Ovary (tissue), 10 donors: ENCODE measurements at regions of chr1 and their contacts with region 1.

Region 1: DNA sequence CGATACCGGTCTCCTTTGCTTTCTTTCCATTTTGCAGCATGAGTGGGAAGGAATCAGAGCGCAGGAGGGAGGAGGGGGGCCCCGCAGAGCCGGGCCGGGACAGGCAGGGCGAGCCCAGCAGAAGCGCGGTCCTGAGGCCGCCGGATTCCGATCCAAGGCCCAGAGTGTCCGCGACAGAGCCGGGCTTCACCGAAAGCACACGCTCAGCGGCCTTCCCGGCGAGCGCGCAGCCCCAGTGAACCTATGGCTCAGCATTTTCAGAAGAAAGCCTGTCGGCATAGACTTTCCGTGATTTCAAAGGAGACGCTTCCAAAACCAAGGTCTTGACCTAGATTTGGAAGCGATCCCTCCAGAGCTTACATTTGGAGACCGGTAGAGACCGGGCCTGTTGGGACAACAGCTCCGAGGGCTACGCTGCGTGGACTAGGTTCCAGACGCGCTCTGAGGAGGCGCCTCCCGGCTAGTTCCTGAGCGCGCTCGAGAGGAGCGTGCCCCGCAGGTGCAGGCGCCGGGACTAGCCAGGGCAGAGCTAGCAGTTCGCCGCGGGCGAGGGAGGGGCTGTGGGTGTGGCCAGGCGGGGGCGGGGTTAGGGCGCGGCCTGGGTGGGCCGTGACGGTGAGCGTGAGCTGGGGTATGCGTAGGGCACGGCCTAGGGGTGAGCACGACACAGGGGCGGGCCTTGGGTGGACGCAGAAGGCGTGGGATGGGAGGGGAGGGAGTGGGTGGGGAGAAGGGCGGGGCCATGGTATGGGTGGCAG is 27.8 kb upstream of the PRSS38 start:
- DNase-seq: peak; percentile 80 to 89 (median 85)
- H3K4me3 ChIP-seq: peak overlapping the region; percentile 41
- H3K27ac ChIP-seq: peak overlapping the region; percentile 17 to 76
- H3K4me1 ChIP-seq: peaks cover 17% of the 10 kb centered on the region
- H3K27me3 ChIP-seq: no peaks in the 10 kb centered on the region
- CTCF ChIP-seq: no peak
- EP300 ChIP-seq: no peak
- POLR2A ChIP-seq: no peak

Region 2: GRCh38 chr1:226135059-226135651 is 1652.5 kb before region 1 on chr1:
- intact Hi-C with region 1: no loop called
- DNase-seq: peak in 1 of 5 donors; percentile 57
- H3K4me3 ChIP-seq: no peak overlapping the region
- H3K27ac ChIP-seq: no peak overlapping the region
- H3K4me1 ChIP-seq: peaks cover 8% of the 10 kb centered on the region
- H3K27me3 ChIP-seq: no peaks in the 10 kb centered on the region
- CTCF ChIP-seq: no peak
- EP300 ChIP-seq: no peak
- POLR2A ChIP-seq: no peak

Region 3: GRCh38 chr1:227728059-227728891 is 59.4 kb before region 1 on chr1:
- intact Hi-C with region 1: loop called in 1 of 4 experiments (anchors 2 kb)
- DNase-seq: peak; percentile 82 to 90 (median 84)
- H3K4me3 ChIP-seq: peak overlapping the region; percentile 57
- H3K27ac ChIP-seq: peak overlapping the region; percentile 87 to 90
- H3K4me1 ChIP-seq: peaks cover 21% of the 10 kb centered on the region
- H3K27me3 ChIP-seq: no peaks in the 10 kb centered on the region
- CTCF ChIP-seq: no peak
- EP300 ChIP-seq: no peak
- POLR2A ChIP-seq: no peak

Region 4: GRCh38 chr1:227855687-227856086 is 68.0 kb after region 1 on chr1:
- intact Hi-C with region 1: no loop called
- DNase-seq: no peak
- H3K4me3 ChIP-seq: no peak overlapping the region
- H3K27ac ChIP-seq: no peak overlapping the region
- H3K4me1 ChIP-seq: no peaks in the 10 kb centered on the region
- H3K27me3 ChIP-seq: no peaks in the 10 kb centered on the region
- CTCF ChIP-seq: no peak
- EP300 ChIP-seq: no peak
- POLR2A ChIP-seq: no peak

Region 5: DNA sequence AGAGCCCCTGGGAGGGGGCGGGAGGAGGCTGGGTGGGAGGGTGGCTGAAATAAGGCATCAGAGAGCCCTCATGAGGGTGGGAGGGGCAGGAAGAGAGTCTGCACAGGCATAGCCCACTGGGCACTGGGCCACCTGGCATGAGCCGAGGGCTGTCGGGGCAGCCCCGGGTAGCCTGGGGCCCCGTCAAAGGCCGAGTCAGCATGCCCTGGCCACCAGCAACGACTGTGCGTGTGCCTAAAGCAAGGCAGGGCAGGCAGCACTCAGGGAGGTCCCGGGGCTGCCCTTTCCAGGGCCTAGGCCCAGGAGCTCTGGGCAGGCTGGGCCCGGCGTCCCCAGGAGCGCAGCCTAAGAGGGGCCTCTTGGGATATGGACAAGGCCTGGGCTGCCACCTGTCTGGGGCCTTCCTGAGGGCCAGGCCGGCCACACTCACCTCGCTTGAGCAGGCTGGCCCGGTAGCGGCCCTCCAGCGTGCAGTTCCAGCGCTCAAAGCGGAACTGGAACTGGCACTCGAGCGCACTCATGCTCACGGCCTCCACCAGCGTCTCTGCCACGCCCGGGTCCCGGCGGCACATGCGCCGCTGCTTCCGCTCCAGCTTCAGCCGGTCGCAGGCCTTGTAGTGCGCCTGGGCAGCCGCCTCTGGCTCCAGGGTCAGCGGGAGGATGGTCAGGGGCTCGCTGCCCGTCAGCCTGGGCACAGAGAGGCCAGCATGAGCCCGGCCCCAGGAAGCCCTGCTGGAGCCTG is 137.3 kb after region 1 on chr1:
- intact Hi-C with region 1: no loop called
- DNase-seq: no peak
- H3K4me3 ChIP-seq: no peak overlapping the region
- H3K27ac ChIP-seq: no peak overlapping the region
- H3K4me1 ChIP-seq: peaks cover 4% of the 10 kb centered on the region
- H3K27me3 ChIP-seq: no peaks in the 10 kb centered on the region
- CTCF ChIP-seq: no peak
- EP300 ChIP-seq: no peak
- POLR2A ChIP-seq: no peak